ENCODE measurements at regions of chr6 and their contacts with region 1.

Region 1: GRCh38 chr6:31739639-31740396 is at the start of gene MSH5:
- DNase-seq: peak; percentile 100
- H3K4me3 Mint-ChIP-seq: peak within 1 kb of the TSS; percentile 98
- H3K27ac Mint-ChIP-seq: peak within 1 kb of the TSS; percentile 94
- H3K4me1 Mint-ChIP-seq: peaks cover 51% of the 10 kb centered on the region
- H3K27me3 Mint-ChIP-seq: no peaks in the 10 kb centered on the region
- CTCF ChIP-seq: no peak
- total RNA-seq, gene MSH5: 156 and 176 TPM in 2 replicates

Region 2: GRCh38 chr6:31702819-31703522 is 36.8 kb before region 1 on chr6 and contains the start of gene ABHD16A:
- CTCF ChIA-PET with region 1: interaction called, 14 read pairs
- intact Hi-C with region 1: loop called (anchors 5 kb)
- DNase-seq: peak; percentile 100
- H3K4me3 Mint-ChIP-seq: peak within 1 kb of the TSS; percentile 77
- H3K27ac Mint-ChIP-seq: peak within 1 kb of the TSS; percentile 66
- H3K4me1 Mint-ChIP-seq: peaks cover 7% of the 10 kb centered on the region
- H3K27me3 Mint-ChIP-seq: no peaks in the 10 kb centered on the region
- CTCF ChIP-seq: peak; percentile 39
- total RNA-seq, gene ABHD16A: 89.9 and 99.1 TPM in 2 replicates

Region 3: GRCh38 chr6:31723245-31723979 is 16.4 kb before region 1 on chr6 and contains the start of gene MPIG6B:
- CTCF ChIA-PET with region 1: interaction called, 14 read pairs
- intact Hi-C with region 1: no loop called
- DNase-seq: no peak
- H3K4me3 Mint-ChIP-seq: no peak within 1 kb of the TSS
- H3K27ac Mint-ChIP-seq: no peak within 1 kb of the TSS
- H3K4me1 Mint-ChIP-seq: peaks cover 21% of the 10 kb centered on the region
- H3K27me3 Mint-ChIP-seq: peaks cover 15% of the 10 kb centered on the region
- CTCF ChIP-seq: no peak
- total RNA-seq, gene MPIG6B: not detected in 2 replicates

Region 4: DNA sequence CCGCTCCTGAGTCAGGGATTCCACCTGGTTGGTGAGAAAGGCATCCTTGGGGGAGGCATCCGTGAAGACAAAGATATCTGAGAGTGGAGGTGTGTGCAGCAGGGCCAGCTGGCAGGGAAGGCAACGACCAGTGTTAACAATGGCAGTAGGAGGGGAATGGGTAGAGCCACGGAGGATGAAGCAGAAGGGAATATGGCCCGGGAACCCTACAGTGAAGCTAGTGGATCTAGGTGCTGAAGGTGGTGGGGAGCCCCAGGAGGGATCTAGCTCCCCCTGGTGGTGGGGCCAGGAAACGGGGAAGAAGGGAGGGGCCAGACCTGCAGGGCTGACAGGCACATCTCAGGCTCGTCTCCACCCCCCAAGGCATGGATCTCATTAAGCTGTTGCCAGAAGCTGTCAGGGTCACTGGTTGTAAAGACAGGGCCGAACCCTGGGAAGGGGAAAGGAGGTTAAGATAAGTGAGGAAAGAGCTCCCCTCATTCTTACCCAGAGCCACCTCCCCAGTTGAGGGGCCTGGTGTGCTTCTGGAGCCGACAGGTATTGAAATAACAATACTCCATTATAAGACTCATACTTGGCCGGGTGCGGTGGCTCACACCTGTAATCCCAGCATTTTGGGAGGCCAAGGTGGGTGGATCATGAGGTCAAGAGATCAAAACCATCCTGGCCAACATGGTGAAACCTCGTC is 30.0 kb after region 1 on chr6:
- CTCF ChIA-PET with region 1: interaction called, 40 read pairs
- intact Hi-C with region 1: no loop called
- DNase-seq: peak; percentile 99
- H3K4me3 Mint-ChIP-seq: no peak overlapping the region
- H3K27ac Mint-ChIP-seq: peak overlapping the region; percentile 40
- H3K4me1 Mint-ChIP-seq: peaks cover 21% of the 10 kb centered on the region
- H3K27me3 Mint-ChIP-seq: no peaks in the 10 kb centered on the region
- CTCF ChIP-seq: peak; percentile 100

Region 5: GRCh38 chr6:31795616-31796298 is 55.9 kb after region 1 on chr6 and contains the start of gene VARS1:
- CTCF ChIA-PET with region 1: interaction called, 10 read pairs
- intact Hi-C with region 1: no loop called
- DNase-seq: peak; percentile 99
- H3K4me3 Mint-ChIP-seq: peak within 1 kb of the TSS; percentile 84
- H3K27ac Mint-ChIP-seq: peak within 1 kb of the TSS; percentile 93
- H3K4me1 Mint-ChIP-seq: peaks cover 40% of the 10 kb centered on the region
- H3K27me3 Mint-ChIP-seq: no peaks in the 10 kb centered on the region
- CTCF ChIP-seq: peak; percentile 96
- total RNA-seq, gene VARS1: 316 and 331 TPM in 2 replicates